Activated naive CD4-positive, alpha-beta T cell treated with anti-CD3 and anti-CD28 coated beads for 36 hours (primary cell): ENCODE measurements at regions of chr1 and their contacts with region 1.

Region 1: GRCh38 chr1:44002606-44003157 is 11.3 kb downstream of the CCDC24 start:
- DNase-seq: no peak
- H3K4me3 Mint-ChIP-seq: no peak overlapping the region
- H3K27ac Mint-ChIP-seq: no peak overlapping the region
- H3K4me1 Mint-ChIP-seq: no peaks in the 10 kb centered on the region
- H3K27me3 Mint-ChIP-seq: no peaks in the 10 kb centered on the region

Region 2: DNA sequence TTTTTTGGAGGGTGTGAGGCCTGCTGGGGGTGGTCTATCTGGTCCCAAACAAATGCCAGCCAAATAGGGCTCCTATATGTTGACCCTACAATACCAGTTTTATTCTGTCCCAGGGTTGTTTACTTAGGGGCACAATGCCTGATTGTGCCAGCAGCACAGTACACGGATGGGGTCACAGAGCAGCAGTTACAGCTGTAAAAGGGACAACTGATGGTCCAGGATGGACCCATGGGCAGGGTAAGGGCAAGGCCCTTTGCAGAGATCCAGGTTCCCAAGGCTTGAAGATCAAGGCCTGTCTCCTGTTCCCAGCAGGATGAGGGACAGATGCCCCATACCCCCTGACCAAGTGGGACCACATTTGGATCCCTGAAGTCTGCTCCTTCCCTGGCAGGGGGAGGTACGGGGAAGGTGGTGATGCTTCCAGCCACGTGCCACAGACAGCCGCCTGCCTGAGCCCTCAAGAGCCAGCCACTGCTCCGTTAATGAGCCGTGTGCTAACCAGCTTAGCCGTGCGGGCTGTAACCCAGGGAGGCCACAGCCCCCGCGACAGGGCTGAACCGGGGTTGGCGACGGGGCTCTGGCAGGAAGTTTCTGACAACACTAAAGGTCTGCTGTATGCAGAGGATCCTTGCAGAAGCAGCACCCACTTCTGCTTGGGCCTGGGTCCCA is 10.4 kb after region 1 on chr1:
- CTCF ChIA-PET with region 1: interaction called, 16 read pairs
- intact Hi-C with region 1: no loop called
- DNase-seq: no peak
- H3K4me3 Mint-ChIP-seq: no peak overlapping the region
- H3K27ac Mint-ChIP-seq: no peak overlapping the region
- H3K4me1 Mint-ChIP-seq: peaks cover 16% of the 10 kb centered on the region
- H3K27me3 Mint-ChIP-seq: no peaks in the 10 kb centered on the region

Region 3: GRCh38 chr1:44036409-44037139 is 33.9 kb after region 1 on chr1:
- CTCF ChIA-PET with region 1: interaction called, 82 read pairs
- intact Hi-C with region 1: loop called (anchors 1 kb)
- DNase-seq: peak; percentile 88
- H3K4me3 Mint-ChIP-seq: no peak overlapping the region
- H3K27ac Mint-ChIP-seq: no peak overlapping the region
- H3K4me1 Mint-ChIP-seq: peaks cover 8% of the 10 kb centered on the region
- H3K27me3 Mint-ChIP-seq: no peaks in the 10 kb centered on the region

Region 4: GRCh38 chr1:44048816-44049215 is 46.1 kb after region 1 on chr1:
- CTCF ChIA-PET with region 1: interaction called, 67 read pairs
- intact Hi-C with region 1: loop called (anchors 1 kb)
- DNase-seq: no peak
- H3K4me3 Mint-ChIP-seq: no peak overlapping the region
- H3K27ac Mint-ChIP-seq: peak overlapping the region; percentile 47
- H3K4me1 Mint-ChIP-seq: peaks cover 21% of the 10 kb centered on the region
- H3K27me3 Mint-ChIP-seq: peaks cover 11% of the 10 kb centered on the region

Region 5: GRCh38 chr1:44059171-44059661 is 56.5 kb after region 1 on chr1:
- CTCF ChIA-PET with region 1: no interaction called
- intact Hi-C with region 1: no loop called
- DNase-seq: no peak
- H3K4me3 Mint-ChIP-seq: no peak overlapping the region
- H3K27ac Mint-ChIP-seq: no peak overlapping the region
- H3K4me1 Mint-ChIP-seq: no peaks in the 10 kb centered on the region
- H3K27me3 Mint-ChIP-seq: no peaks in the 10 kb centered on the region